Body of pancreas (tissue), 4 donors: ENCODE measurements at regions of chr4 and their contacts with region 1.

Region 1: DNA sequence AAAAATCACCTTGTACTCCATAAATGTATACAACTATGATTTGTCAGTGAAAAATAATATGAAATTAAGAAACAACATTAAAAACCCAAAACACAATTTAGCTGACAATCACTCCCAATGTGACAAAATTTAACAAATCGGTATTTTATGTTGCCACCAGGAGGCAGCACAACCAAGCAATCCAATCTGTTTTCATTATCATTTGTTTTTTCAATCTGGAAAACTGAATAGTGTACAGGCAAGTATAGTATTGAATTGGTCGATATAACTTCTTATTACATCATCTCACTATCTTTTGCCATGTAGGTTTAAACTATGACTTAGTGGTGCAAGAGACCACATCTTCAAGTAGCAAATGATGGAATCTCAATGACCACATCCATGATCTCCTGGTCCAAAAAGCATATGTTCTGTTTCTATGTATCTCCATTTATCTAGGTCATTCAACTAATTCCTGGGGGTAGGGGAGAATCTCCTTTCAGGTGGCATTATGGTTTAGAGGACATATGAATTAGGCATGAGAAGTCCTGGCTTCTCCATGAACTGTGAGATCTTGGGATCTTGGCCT is 112.9 kb upstream of the AGA start:
- DNase-seq: peak in 3 of 4 donors; percentile 10 to 40 (median 36)
- ATAC-seq: no peak
- H3K4me3 ChIP-seq: no peak overlapping the region
- H3K27ac ChIP-seq: no peak overlapping the region
- H3K4me1 ChIP-seq: no peaks in the 10 kb centered on the region
- H3K27me3 ChIP-seq: no peaks in the 10 kb centered on the region
- CTCF ChIP-seq: peak; percentile 23 to 67 (median 65)
- POLR2A ChIP-seq: no peak

Region 2: GRCh38 chr4:177680308-177680707 is 125.2 kb after region 1 on chr4:
- intact Hi-C with region 1: no loop called
- DNase-seq: no peak
- ATAC-seq: no peak
- H3K4me3 ChIP-seq: no peak overlapping the region
- H3K27ac ChIP-seq: no peak overlapping the region
- H3K4me1 ChIP-seq: no peaks in the 10 kb centered on the region
- H3K27me3 ChIP-seq: no peaks in the 10 kb centered on the region
- CTCF ChIP-seq: no peak
- POLR2A ChIP-seq: no peak

Region 3: DNA sequence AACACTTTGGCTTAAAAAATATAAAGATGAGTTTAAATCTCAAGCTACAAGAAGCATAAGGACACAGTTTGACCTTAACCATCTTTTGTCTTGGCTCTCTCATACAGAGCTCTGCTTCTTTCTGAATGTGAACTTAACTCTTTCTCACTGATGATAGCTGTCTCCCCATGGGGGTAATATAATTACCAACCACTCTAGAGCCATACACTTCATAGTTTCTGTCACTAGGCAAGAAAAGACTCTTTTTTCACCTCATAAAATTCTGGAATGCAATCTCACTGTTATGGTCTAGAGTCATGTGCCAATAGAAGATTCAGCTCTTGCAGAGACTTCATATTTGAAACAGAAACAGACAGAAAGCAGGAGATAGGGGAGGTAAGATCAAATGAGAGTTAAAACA is 368.8 kb after region 1 on chr4:
- intact Hi-C with region 1: no loop called
- DNase-seq: no peak
- ATAC-seq: no peak
- H3K4me3 ChIP-seq: no peak overlapping the region
- H3K27ac ChIP-seq: no peak overlapping the region
- H3K4me1 ChIP-seq: no peaks in the 10 kb centered on the region
- H3K27me3 ChIP-seq: no peaks in the 10 kb centered on the region
- CTCF ChIP-seq: no peak
- POLR2A ChIP-seq: no peak

Region 4: GRCh38 chr4:179307297-179308136 is 1752.4 kb after region 1 on chr4:
- intact Hi-C with region 1: loop called (anchors 10 kb)
- DNase-seq: peak; percentile 42 to 55 (median 50)
- ATAC-seq: peak; percentile 70
- H3K4me3 ChIP-seq: no peak overlapping the region
- H3K27ac ChIP-seq: no peak overlapping the region
- H3K4me1 ChIP-seq: no peaks in the 10 kb centered on the region
- H3K27me3 ChIP-seq: no peaks in the 10 kb centered on the region
- CTCF ChIP-seq: peak; percentile 30 to 65 (median 59)
- POLR2A ChIP-seq: no peak